H1 (cell line): ENCODE measurements at regions of chr1 and their contacts with region 1.

Region 1: GRCh38 chr1:247373721-247374141 is 42.1 kb upstream of the ZNF496 start:
- DNase-seq: peak in 1 of 2 experiments; percentile 89
- H3K4me3 ChIP-seq: peak overlapping the region in 1 of 4 experiments; percentile 43; a peak in 1 of 8 replicates
- H3K27ac ChIP-seq: no peak overlapping the region
- H3K4me1 ChIP-seq: peaks cover 13 to 35% (median 23%) of the 10 kb centered on the region in 4 experiments; a peak in 6 of 7 replicates
- H3K27me3 ChIP-seq: no peaks in the 10 kb centered on the region
- CTCF ChIP-seq: peak; percentile 56 to 74 (median 63)
- EP300 ChIP-seq: 0 out of 3 replicates have a peak, but pooled peaks of 1 of the 2 experiments have one; percentile 7
- POLR2A ChIP-seq: no peak
- RAD21 ChIP-seq: peak; percentile 29 to 51

Region 2: GRCh38 chr1:247198781-247199180 is 174.9 kb before region 1 on chr1:
- CTCF ChIA-PET with region 1: no interaction called
- POLR2A ChIA-PET with region 1: no interaction called
- DNase-seq: no peak
- H3K4me3 ChIP-seq: no peak overlapping the region
- H3K27ac ChIP-seq: no peak overlapping the region; the same call in 1 of the 2 replicates
- H3K4me1 ChIP-seq: no peaks in the 10 kb centered on the region
- H3K27me3 ChIP-seq: no peaks in the 10 kb centered on the region
- CTCF ChIP-seq: no peak
- EP300 ChIP-seq: no peak
- POLR2A ChIP-seq: no peak
- RAD21 ChIP-seq: no peak

Region 3: DNA sequence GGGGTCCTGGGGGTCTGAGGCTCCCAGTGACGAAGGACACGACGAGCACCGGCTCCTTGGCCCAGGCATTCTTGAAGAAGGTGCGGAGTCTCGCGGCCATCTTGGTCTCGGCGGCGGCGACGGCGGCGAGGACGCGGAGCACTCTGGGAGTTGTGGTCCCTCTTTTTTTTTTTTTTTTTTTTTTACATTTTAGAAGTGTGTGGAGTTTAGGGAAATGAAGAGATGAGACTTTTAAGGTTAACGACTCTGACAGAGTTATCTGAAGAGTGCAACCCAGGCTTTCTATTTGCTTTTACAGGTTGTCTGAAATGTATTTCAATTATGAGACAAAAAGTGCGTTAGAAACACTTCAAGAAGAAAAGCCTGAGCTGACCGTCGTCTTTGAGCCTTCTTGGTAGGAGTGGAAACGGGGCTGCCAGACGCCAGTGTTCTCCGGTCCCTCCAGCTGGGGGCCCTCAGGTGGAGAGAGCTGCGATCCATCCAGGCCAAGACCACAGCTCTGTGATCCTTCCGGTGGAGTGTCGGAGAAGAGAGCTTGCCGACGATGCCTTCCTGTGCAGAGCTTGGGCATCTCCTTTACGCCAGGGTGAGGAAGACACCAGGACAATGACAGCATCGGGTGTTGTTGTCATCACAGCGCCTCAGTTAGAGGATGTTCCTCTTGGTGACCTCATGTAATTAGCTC is 74.5 kb after region 1 on chr1:
- CTCF ChIA-PET with region 1: interaction called, 13 read pairs
- POLR2A ChIA-PET with region 1: no interaction called
- DNase-seq: peak; percentile 23 to 71
- H3K4me3 ChIP-seq: peak overlapping the region; percentile 27 to 58 (median 37)
- H3K27ac ChIP-seq: no peak overlapping the region
- H3K4me1 ChIP-seq: peaks cover 0 to 4% (median 1%) of the 10 kb centered on the region in 4 experiments; a peak in 3 of 7 replicates
- H3K27me3 ChIP-seq: no peaks in the 10 kb centered on the region
- CTCF ChIP-seq: peak; percentile 2 to 37 (median 21); a peak in 3 of 4 replicates
- EP300 ChIP-seq: peak in 1 of 2 experiments; percentile 45; a peak in 1 of 3 replicates
- POLR2A ChIP-seq: peak in 1 of 2 experiments; percentile 69; a peak in 1 of 3 replicates
- RAD21 ChIP-seq: peak; percentile 25 to 38; a peak in 2 of 4 replicates